GM10248 (cell line): ENCODE measurements at regions of chr16 and their contacts with region 1.

Region 1: DNA sequence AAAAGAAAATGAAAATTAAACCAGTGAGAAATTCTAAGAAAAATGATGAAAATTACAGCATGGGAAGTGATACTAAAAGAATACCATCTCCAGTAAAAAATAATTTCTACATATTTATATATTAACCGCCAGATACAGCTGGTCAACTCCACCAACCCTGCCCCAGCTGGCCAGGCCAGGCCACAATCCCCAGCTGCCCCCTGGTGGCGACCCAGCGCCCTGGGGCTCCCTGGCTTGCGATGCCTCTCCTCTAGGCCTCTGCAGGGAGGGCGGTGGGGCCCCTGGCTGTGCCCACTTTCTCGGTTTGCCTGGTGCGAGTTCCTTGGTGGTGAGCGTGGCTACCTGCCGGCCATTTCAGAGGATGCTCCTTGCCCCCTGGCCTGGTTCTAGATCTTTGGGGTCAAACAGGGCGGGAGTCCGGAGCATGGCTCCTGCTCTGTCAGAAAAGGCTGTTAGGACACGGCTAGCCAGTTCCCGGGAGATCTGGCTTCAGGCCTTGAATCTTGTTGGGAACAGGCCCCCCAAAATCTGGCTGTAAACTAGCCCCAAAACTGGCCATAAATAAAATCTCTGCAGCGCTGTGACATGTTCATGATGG is 14.5 kb downstream of the GLIS2 start:
- DNase-seq: peak; percentile 89
- CTCF ChIP-seq: peak; percentile 95

Region 2: GRCh38 chr16:3983081-3983520 is 347.3 kb before region 1 on chr16:
- CTCF ChIA-PET with region 1: interaction called, 16 read pairs
- POLR2A ChIA-PET with region 1: no interaction called
- DNase-seq: peak; percentile 64
- CTCF ChIP-seq: peak; percentile 71

Region 3: GRCh38 chr16:4288148-4288921 is 42.0 kb before region 1 on chr16:
- CTCF ChIA-PET with region 1: interaction called, 86 read pairs
- POLR2A ChIA-PET with region 1: no interaction called
- DNase-seq: peak; percentile 94
- CTCF ChIP-seq: peak; percentile 99

Region 4: DNA sequence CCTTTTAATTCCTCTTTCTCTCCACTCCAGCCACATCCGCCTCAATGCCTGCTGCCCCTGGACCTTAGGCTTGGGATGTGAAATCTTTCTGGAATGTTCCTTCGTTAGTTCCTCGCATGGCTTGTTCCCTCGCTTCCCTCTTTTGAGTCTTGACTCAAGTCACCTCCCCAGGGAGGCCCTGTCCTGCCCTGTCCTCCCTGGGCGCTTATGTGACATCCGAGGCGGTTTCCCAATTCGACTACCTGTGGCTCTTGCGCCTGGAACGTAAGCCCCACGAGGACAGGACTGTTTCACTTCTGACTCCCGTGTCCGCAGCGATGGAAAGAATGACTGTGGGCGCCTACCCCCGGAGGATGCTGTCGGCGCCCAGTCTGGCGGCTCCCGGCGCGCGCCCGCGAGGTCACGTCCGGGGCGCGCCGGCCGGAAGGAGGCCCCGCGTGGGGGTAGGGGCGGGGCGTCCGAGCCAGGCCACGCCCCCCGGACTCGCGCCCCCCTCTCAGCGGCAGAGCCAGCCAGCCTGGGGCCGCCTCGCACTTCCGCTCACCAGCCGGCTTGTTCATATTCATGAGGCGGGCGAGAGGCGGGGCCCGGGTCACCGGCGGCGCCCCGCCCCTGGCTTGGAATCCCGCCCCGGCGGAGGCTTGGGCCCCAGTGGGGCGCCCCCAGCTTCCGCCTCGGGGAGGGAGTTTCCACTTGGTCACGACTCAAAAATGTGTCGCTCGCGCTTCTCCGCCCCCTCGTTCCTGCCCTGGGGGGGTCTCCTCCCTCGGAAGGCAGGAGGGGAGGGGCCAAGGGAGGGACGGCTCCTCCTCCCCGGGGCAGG is 22.9 kb before region 1 on chr16:
- CTCF ChIA-PET with region 1: interaction called, 201 read pairs
- POLR2A ChIA-PET with region 1: no interaction called
- DNase-seq: peak; percentile 99
- CTCF ChIP-seq: peak; percentile 1

Region 5: GRCh38 chr16:4319454-4320421 is 10.6 kb before region 1 on chr16:
- CTCF ChIA-PET with region 1: interaction called, 201 read pairs
- POLR2A ChIA-PET with region 1: no interaction called
- DNase-seq: peak; percentile 73
- CTCF ChIP-seq: no peak

Region 6: DNA sequence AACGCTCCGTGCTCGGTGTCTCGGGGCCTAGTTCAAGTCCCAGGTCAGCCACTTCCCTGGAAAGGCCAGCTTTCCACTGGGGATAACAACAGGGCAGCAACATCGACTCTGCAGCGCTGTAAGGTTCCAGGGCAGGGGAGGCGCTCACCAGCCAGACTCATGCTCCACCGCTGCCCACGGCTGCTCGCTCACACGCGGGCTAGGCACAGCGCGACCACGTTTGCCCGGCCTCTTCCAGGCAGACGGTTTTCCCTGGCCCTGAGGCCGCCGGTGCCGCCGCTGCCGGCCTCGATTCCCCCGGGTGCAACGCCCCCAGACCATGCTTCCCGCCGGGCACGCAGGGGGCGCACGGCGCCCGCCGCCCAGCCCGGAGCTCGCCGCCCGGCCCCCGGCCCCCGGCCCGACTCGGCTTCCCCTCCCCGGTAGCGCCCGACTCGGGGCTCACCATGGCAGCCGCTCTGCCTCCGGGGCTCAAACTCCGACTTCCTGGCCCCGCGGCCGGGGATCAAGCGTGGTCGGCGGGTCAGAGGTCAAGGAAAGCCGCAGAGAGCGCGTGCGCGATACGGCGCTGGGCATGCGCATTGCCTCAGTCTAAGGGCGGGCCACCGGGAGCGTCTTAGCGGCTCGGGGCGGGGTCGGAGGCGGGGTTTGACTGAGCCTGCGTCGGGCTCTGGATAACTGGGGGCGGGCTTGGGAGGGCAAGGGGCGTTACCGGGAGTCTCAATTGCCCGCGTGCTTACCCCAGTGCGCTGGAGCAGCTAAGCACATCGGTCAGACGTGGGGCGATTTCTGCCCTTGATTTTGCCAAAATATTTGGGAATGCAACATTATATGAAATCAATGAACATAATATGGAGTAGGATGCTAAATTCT is 20.6 kb after region 1 on chr16 and contains the start of gene PAM16:
- CTCF ChIA-PET with region 1: interaction called, 12 read pairs
- POLR2A ChIA-PET with region 1: no interaction called
- DNase-seq: peak; percentile 98
- CTCF ChIP-seq: no peak

Region 7: GRCh38 chr16:4410335-4411075 is 80.1 kb after region 1 on chr16:
- CTCF ChIA-PET with region 1: no interaction called
- POLR2A ChIA-PET with region 1: no interaction called
- DNase-seq: no peak
- CTCF ChIP-seq: no peak